ENCODE measurements at regions of chr10 and their contacts with region 1.

Region 1: GRCh38 chr10:102225646-102226541 is at the start of gene ELOVL3:
- DNase-seq: peak; percentile 94
- H3K4me3 ChIP-seq: peak within 1 kb of the TSS in 2 of 4 donors; percentile 0 to 36
- H3K27ac ChIP-seq: peak within 1 kb of the TSS; percentile 30 to 75 (median 68)
- H3K4me1 ChIP-seq: peaks cover 8 to 27% (median 19%) of the 10 kb centered on the region in 4 donors
- H3K27me3 ChIP-seq: peaks cover 39% of the 10 kb centered on the region
- CTCF ChIP-seq: peak in 1 of 5 experiments; percentile 35
- EP300 ChIP-seq: no peak
- POLR2A ChIP-seq: no peak
- total RNA-seq, gene ELOVL3: not detected

Region 2: DNA sequence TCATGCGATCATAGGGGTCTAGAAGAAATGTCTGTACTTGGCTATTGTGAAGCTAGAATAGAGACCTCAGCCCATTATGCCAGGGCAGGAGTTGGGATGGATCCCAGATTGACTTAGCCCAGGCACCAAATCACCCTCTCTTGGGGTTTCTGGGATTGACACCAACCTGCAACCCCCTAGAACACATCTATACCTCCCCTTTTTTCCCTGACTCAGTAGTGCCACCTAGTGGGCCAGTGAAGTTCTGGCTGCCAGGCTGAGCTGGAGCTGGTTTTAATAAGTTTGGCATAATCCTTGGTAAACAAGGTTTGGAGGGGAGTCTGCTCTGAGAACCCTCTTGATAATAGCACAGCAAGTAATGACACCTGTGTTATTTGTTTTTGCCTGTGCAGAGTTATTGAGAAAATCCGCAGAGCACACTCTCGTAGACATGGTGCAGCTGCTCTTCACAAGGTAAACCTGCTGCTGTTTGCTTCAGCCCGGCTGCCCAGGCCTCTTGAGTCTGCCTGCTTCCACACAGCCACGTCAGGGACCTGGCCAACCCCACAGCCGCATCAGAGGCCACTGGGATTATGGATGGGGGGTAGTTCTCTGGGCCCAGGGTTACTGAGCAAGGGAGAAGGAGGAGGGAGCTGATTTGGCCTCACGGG is 126.3 kb after region 1 on chr10:
- in situ Hi-C with region 1: loop called (anchors 5 to 10 kb)
- intact Hi-C with region 1: loop called (anchors 2 kb)
- DNase-seq: peak; percentile 59
- H3K4me3 ChIP-seq: no peak overlapping the region
- H3K27ac ChIP-seq: no peak overlapping the region
- H3K4me1 ChIP-seq: no peaks in the 10 kb centered on the region
- H3K27me3 ChIP-seq: no peaks in the 10 kb centered on the region
- CTCF ChIP-seq: peak; percentile 76 to 93 (median 83)
- EP300 ChIP-seq: no peak
- POLR2A ChIP-seq: no peak